ENCODE measurements at regions of chrX and their contacts with region 1.

Region 1: GRCh38 chrX:101287402-101287801 is 3.7 kb downstream of the TAF7L start:
- DNase-seq: peak; percentile 4
- ATAC-seq: no peak
- H3K4me3 Mint-ChIP-seq: no peak overlapping the region
- H3K27ac Mint-ChIP-seq: no peak overlapping the region
- H3K4me1 Mint-ChIP-seq: no peaks in the 10 kb centered on the region
- H3K27me3 Mint-ChIP-seq: peaks cover 1% of the 10 kb centered on the region

Region 2: DNA sequence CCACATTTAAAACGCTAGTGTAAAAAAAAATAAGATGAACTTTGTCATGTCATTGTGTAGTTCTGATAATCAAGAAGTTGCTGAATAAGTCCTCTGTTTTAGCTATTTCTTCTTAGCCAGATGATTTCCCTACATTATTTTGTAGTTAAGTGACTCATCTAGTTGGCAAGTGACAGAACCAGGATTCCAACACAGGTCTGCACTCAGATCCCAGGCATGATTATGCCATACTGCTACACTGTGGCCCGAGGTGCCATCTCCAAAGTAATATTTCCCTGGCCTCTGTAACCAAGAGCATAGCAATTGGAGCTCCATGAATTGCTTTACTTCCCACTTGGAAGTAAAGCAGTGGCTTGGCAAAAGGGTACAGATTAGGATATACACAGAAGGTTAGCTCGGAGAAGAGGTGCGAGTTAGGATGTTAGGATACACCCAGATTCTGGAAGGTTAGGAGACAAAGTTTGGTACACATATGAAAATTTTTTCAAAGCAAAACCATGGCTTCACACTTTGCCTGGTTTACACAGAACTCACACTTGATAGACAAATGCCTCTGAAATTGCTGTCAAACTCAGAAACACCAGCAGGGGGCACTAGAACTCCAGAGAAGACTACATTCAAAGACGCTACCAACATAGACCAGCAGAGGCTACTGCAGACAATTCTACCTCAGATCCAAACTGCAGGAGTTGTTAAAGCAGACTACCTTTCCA is 602.0 kb before region 1 on chrX:
- CTCF ChIA-PET with region 1: interaction called, 3 read pairs
- POLR2A ChIA-PET with region 1: no interaction called
- intact Hi-C with region 1: loop called (anchors 1 to 2 kb)
- DNase-seq: peak; percentile 75
- ATAC-seq: peak; percentile 84
- H3K4me3 Mint-ChIP-seq: no peak overlapping the region
- H3K27ac Mint-ChIP-seq: no peak overlapping the region
- H3K4me1 Mint-ChIP-seq: peaks cover 13% of the 10 kb centered on the region
- H3K27me3 Mint-ChIP-seq: peaks cover 3% of the 10 kb centered on the region

Region 3: DNA sequence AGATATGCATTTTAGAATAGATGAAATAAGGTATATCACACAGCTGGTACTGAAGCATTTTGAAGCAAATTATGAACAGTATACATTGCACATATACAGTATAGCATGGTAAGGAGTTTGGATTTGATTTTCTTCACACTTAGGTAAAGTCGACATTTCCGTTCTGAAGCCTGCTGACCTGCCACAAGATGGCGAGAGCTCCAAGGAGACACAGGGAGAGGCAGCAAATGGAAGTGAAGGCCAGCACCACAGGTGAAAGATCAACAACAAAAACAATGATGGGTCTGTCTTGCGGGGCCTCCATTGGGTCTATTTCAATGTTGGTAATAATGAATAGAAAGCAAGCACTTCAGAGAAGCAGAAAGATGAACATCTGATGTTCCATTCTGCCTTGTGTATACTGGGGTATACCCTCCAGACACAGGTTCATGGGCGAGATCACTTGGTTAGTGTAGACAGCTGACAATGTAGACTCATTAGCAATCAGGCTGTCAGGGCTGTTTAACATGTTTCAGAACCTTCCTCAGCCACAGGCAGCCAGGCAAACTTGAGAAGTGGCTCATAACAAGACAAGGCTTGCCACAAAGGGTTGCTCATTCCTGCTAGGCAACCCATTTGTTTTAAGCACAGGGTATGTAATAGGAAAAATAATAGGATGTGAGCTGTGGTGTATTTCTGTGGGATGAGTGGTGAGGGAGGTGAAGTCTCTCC is 391.9 kb before region 1 on chrX:
- CTCF ChIA-PET with region 1: no interaction called
- POLR2A ChIA-PET with region 1: no interaction called
- intact Hi-C with region 1: loop called in 1 of 2 experiments (anchors 1 kb)
- DNase-seq: peak; percentile 52
- ATAC-seq: peak; percentile 51
- H3K4me3 Mint-ChIP-seq: no peak overlapping the region
- H3K27ac Mint-ChIP-seq: no peak overlapping the region
- H3K4me1 Mint-ChIP-seq: no peaks in the 10 kb centered on the region
- H3K27me3 Mint-ChIP-seq: no peaks in the 10 kb centered on the region

Region 4: DNA sequence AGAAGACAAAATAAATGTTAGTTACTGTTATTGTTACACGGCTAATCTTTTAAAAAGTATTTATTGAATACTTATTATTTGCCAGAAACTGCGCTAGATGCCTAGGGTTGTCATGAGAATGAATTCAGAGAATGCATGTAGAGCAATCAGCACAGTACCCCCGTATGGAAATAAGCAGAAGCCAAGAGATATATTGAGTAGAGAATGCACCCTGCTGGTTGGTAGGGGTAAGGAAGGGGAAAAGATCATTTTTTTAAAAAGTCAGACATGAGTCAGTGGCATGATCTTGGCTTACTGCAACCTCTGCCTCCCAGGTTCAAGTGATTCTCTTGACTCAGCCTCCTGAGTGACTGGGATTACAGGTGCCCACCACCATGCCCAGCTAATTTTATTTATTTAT is 80.9 kb before region 1 on chrX:
- CTCF ChIA-PET with region 1: no interaction called
- POLR2A ChIA-PET with region 1: no interaction called
- intact Hi-C with region 1: loop called in 1 of 2 experiments (anchors 5 kb)
- DNase-seq: peak; percentile 12
- ATAC-seq: peak; percentile 83
- H3K4me3 Mint-ChIP-seq: no peak overlapping the region
- H3K27ac Mint-ChIP-seq: no peak overlapping the region
- H3K4me1 Mint-ChIP-seq: peaks cover 16% of the 10 kb centered on the region
- H3K27me3 Mint-ChIP-seq: no peaks in the 10 kb centered on the region

Region 5: DNA sequence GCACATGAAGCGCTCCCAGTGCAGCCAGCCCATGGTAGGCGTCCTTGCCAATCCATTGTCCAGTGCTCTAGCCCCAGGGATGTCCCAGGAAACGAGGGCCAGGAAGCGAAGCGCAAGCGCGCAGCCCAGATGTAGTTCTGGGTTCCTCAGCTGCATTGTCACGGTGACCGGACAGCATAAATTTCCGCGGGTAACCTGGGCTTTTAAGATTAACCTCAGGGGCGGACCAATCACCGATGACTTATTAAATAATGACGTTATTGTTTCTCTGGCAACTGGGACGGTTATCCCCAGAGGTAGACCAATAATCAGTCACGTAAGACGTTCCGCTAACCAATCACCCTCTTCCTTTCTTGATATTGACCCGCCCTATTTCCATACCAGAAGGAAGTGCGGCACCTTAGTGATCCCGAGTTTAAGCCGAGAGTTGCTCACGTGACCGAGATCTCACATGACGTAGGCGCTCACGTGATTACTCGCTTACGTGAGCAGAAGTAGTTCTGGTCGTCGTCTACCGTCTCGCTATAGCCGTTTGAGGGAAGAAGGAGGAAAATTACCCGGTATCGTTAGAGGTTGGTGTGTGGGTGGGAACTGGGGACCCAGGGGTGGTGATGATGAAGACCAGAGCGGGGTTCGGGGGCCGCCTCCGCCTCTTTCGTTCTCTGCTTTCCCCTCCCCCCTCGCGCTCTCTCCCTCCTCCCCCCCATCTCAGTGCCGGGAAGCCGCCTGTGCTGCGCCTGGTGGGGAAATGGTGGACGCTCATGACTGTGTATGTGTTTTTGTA is 120.5 kb after region 1 on chrX and contains the starts of genes GLA and HNRNPH2:
- CTCF ChIA-PET with region 1: no interaction called
- POLR2A ChIA-PET with region 1: no interaction called
- intact Hi-C with region 1: no loop called
- DNase-seq: peak; percentile 91
- ATAC-seq: peak; percentile 94
- H3K4me3 Mint-ChIP-seq: peak within 1 kb of the TSS; percentile 97
- H3K27ac Mint-ChIP-seq: peak within 1 kb of the TSS; percentile 97
- H3K4me1 Mint-ChIP-seq: peaks cover 26% of the 10 kb centered on the region
- H3K27me3 Mint-ChIP-seq: no peaks in the 10 kb centered on the region
- total RNA-seq, gene GLA: 32.6 to 42.2 TPM
- total RNA-seq, gene HNRNPH2: 18.6 to 26.9 TPM

Measured in activated CD4-positive, alpha-beta T cell treated with anti-CD3 and anti-CD28 coated beads for 36 hours (primary cell).